Endothelial cell of umbilical vein (primary cell): ENCODE measurements at regions of chr14 and their contacts with region 1.

Region 1: GRCh38 chr14:24310646-24311604 is at the start of gene LTB4R:
- DNase-seq: peak; percentile 88
- H3K4me3 ChIP-seq: peak within 1 kb of the TSS in 1 of 3 experiments; percentile 19
- H3K27ac ChIP-seq: peak within 1 kb of the TSS; percentile 91
- H3K4me1 ChIP-seq: peaks cover 60% of the 10 kb centered on the region
- H3K27me3 ChIP-seq: no peaks in the 10 kb centered on the region
- CTCF ChIP-seq: peak; percentile 20 to 53
- POLR2A ChIP-seq: peak; percentile 34
- total RNA-seq, gene LTB4R: 6.2 and 10.5 TPM in 2 replicates

Region 2: DNA sequence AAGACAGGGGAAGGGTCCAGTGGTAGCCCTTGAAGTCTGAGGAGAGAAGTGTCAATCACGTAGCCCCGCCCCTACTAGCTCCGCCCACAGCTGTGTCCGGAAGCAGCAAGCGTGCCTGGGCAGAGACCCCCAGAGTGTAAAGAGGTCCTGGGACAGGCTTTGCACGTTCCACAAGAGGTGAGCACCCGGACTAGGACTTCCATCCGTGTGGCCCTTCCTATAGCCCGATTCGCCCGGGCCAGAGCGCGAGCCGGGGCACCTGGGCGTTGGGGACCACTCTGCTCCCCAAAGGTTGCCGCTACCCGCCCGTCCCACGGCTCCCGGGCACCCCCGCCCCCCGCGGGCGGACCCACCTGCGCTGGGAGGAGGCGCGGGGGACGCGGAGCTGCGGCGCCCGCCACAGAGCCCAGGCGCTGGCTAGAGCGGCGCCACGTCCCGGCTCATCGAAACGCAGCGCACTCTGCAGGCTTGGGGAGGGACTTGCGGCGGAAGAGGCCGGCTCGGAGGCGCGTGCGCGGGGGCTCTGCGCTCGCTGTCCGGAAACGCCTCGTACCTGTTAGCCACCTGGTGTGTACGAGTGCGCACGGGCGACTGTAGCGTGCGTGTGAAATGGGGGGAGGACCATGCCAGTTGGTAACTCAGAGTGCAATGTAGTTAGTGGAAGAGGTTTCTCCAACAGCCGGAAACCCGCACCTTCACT is 39.6 kb before region 1 on chr14 and contains the start of gene RABGGTA:
- CTCF ChIA-PET with region 1: interaction called, 10 read pairs
- POLR2A ChIA-PET with region 1: no interaction called
- dilution Hi-C with region 1: no loop called
- intact Hi-C with region 1: loop called (anchors 1 kb)
- DNase-seq: peak; percentile 79
- H3K4me3 ChIP-seq: peak within 1 kb of the TSS; percentile 58 to 77 (median 65)
- H3K27ac ChIP-seq: peak within 1 kb of the TSS; percentile 92
- H3K4me1 ChIP-seq: peaks cover 9% of the 10 kb centered on the region
- H3K27me3 ChIP-seq: no peaks in the 10 kb centered on the region
- CTCF ChIP-seq: peak; percentile 74 to 85
- POLR2A ChIP-seq: peak; percentile 81
- total RNA-seq, gene RABGGTA: 29.3 and 29.5 TPM in 2 replicates

Region 3: DNA sequence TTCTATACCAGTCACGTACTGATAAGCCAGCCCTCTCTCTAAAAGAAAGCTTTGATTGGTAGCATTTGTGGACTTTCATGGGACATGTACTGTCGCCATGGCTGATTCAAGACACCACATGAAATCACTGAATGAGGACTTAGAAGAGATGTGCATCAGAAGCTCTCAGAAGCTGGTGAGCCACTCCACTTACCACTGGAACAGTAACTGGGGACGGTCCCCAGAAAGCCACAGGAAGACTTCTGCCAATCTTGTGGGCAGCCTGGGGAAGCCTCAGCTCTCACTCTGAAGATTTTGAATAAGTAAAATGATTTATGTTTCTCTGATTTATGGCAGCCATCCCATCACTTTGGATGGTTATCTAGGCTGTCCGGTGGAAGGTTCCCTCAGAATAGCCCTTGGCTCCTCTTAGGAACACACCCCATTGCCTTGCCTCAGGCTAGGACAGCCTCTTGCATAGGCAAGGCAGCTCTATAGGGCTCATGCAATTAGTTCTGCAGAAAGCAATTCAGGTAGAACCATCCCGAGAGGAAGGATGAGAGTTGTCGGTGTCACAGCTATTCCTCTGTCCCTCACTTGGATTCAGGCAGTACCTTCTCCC is 21.2 kb before region 1 on chr14:
- CTCF ChIA-PET with region 1: interaction called, 16 read pairs
- POLR2A ChIA-PET with region 1: no interaction called
- dilution Hi-C with region 1: no loop called
- intact Hi-C with region 1: no loop called
- DNase-seq: no peak
- H3K4me3 ChIP-seq: no peak overlapping the region
- H3K27ac ChIP-seq: no peak overlapping the region
- H3K4me1 ChIP-seq: no peaks in the 10 kb centered on the region
- H3K27me3 ChIP-seq: no peaks in the 10 kb centered on the region
- CTCF ChIP-seq: no peak
- POLR2A ChIP-seq: no peak

Region 4: GRCh38 chr14:24327303-24327702 is 16.4 kb after region 1 on chr14:
- CTCF ChIA-PET with region 1: interaction called, 47 read pairs
- POLR2A ChIA-PET with region 1: no interaction called
- dilution Hi-C with region 1: no loop called
- intact Hi-C with region 1: no loop called
- DNase-seq: no peak
- H3K4me3 ChIP-seq: no peak overlapping the region
- H3K27ac ChIP-seq: no peak overlapping the region
- H3K4me1 ChIP-seq: peaks cover 6% of the 10 kb centered on the region
- H3K27me3 ChIP-seq: no peaks in the 10 kb centered on the region
- CTCF ChIP-seq: no peak
- POLR2A ChIP-seq: no peak

Region 5: GRCh38 chr14:24392325-24393091 is 81.6 kb after region 1 on chr14:
- CTCF ChIA-PET with region 1: no interaction called
- POLR2A ChIA-PET with region 1: no interaction called
- dilution Hi-C with region 1: no loop called
- intact Hi-C with region 1: no loop called
- DNase-seq: peak; percentile 70
- H3K4me3 ChIP-seq: peak overlapping the region in 1 of 3 experiments; percentile 19
- H3K27ac ChIP-seq: peak overlapping the region; percentile 48
- H3K4me1 ChIP-seq: peaks cover 23% of the 10 kb centered on the region
- H3K27me3 ChIP-seq: peaks cover 0 to 3% of the 10 kb centered on the region in 2 experiments
- CTCF ChIP-seq: peak in 1 of 2 donors; percentile 12
- POLR2A ChIP-seq: no peak